GM12878 (cell line): ENCODE measurements at regions of chr7 and their contacts with region 1.

Region 1: GRCh38 chr7:95454438-95455045 is 19.7 kb upstream of the PON2 start:
- DNase-seq: no peak
- ATAC-seq: peak; percentile 63
- H3K4me3 ChIP-seq: no peak overlapping the region
- H3K27ac ChIP-seq: no peak overlapping the region
- H3K4me1 ChIP-seq: no peaks in the 10 kb centered on the region
- H3K27me3 ChIP-seq: no peaks in the 10 kb centered on the region
- CTCF ChIP-seq: no peak; a peak in 1 of 6 replicates
- EP300 ChIP-seq: peak in 1 of 2 experiments; percentile 39; a peak in 1 of 4 replicates
- POLR2A ChIP-seq: no peak
- RAD21 ChIP-seq: peak; percentile 21; the same call in 1 of the 2 replicates

Region 2: GRCh38 chr7:95421000-95421846 is 33.3 kb before region 1 on chr7:
- CTCF ChIA-PET with region 1: no interaction called
- POLR2A ChIA-PET with region 1: no interaction called
- RAD21 ChIA-PET with region 1: interaction called, 10 read pairs
- SMC1A ChIA-PET with region 1: interaction called, 12 read pairs
- in situ Hi-C with region 1: no loop called
- intact Hi-C with region 1: no loop called
- DNase-seq: no peak
- ATAC-seq: peak; percentile 83
- H3K4me3 ChIP-seq: no peak overlapping the region
- H3K27ac ChIP-seq: no peak overlapping the region
- H3K4me1 ChIP-seq: no peaks in the 10 kb centered on the region
- H3K27me3 ChIP-seq: no peaks in the 10 kb centered on the region
- CTCF ChIP-seq: no peak
- EP300 ChIP-seq: no peak
- POLR2A ChIP-seq: no peak
- RAD21 ChIP-seq: no peak

Region 3: GRCh38 chr7:95427166-95427565 is 27.4 kb before region 1 on chr7:
- CTCF ChIA-PET with region 1: interaction called, 5 read pairs
- POLR2A ChIA-PET with region 1: interaction called, 4 read pairs
- RAD21 ChIA-PET with region 1: interaction called, 10 read pairs
- SMC1A ChIA-PET with region 1: interaction called, 13 read pairs
- in situ Hi-C with region 1: no loop called
- intact Hi-C with region 1: no loop called
- DNase-seq: no peak
- ATAC-seq: no peak
- H3K4me3 ChIP-seq: no peak overlapping the region
- H3K27ac ChIP-seq: no peak overlapping the region
- H3K4me1 ChIP-seq: no peaks in the 10 kb centered on the region
- H3K27me3 ChIP-seq: no peaks in the 10 kb centered on the region
- CTCF ChIP-seq: no peak
- EP300 ChIP-seq: no peak
- POLR2A ChIP-seq: no peak
- RAD21 ChIP-seq: no peak

Region 4: DNA sequence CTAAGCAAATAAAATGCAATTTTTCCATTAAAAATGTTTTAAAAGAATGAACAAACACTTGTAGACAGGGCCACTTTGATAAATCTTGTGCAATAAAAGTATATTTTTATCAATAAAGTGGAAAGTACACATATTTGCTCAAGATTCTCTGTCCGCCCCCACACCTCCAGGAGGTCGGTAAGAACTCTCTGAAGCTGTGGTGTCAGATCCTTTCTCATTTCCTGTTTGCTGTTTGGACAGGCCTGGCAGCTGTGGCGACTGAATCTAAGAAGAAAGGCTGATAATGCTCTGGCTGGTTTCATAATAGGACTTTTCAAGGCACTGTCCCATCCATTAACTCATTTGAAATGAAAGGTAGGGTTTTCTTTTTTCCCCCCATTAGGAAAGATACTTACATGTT is 15.9 kb after region 1 on chr7:
- CTCF ChIA-PET with region 1: interaction called, 27 read pairs
- POLR2A ChIA-PET with region 1: interaction called, 4 read pairs
- RAD21 ChIA-PET with region 1: interaction called, 22 read pairs
- SMC1A ChIA-PET with region 1: interaction called, 32 read pairs
- in situ Hi-C with region 1: no loop called
- intact Hi-C with region 1: loop called (anchors 1 kb)
- DNase-seq: no peak
- ATAC-seq: peak; percentile 99
- H3K4me3 ChIP-seq: no peak overlapping the region
- H3K27ac ChIP-seq: no peak overlapping the region
- H3K4me1 ChIP-seq: no peaks in the 10 kb centered on the region; the same call in 1 of the 2 replicates
- H3K27me3 ChIP-seq: no peaks in the 10 kb centered on the region
- CTCF ChIP-seq: no peak
- EP300 ChIP-seq: no peak
- POLR2A ChIP-seq: no peak
- RAD21 ChIP-seq: no peak

Region 5: DNA sequence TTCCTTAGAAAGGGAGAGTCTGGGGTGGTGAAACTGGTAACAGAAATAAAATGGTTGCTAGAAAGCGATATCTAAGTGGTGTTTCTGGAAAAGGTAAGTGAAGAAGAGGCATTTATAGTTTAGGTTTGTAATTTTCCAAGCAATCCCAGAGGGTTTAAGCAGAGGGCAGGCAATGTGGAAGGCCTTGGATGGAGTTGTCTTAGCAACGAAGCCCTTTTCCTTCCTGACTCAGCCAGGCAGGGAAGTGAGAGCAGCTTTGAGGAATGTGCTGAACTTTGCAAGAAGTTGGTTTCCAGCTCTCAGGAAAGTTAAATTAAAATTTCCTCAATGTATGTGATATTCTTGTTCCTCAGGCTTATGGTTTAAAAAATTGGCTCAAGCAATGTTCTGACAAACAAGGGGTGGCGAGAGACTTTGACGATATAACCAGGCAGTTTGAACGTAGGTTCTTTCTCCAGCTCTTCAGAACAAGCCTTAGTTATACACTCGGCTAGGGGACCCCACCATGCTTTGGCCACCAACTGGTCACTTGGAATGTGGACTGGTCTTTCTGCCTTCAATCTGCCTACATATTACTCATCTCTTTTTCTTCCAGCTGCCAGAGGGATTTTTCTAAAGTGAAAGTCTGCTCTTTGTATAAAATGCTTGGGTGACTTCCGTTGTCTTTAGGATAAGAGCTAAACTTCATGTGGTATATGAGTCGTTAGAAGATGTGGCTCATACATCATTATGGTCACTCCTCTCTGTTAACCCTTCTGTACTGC is 934.3 kb after region 1 on chr7:
- CTCF ChIA-PET with region 1: no interaction called
- POLR2A ChIA-PET with region 1: no interaction called
- RAD21 ChIA-PET with region 1: no interaction called
- SMC1A ChIA-PET with region 1: no interaction called
- in situ Hi-C with region 1: no loop called
- intact Hi-C with region 1: no loop called
- DNase-seq: no peak
- ATAC-seq: no peak
- H3K4me3 ChIP-seq: no peak overlapping the region
- H3K27ac ChIP-seq: no peak overlapping the region
- H3K4me1 ChIP-seq: no peaks in the 10 kb centered on the region
- H3K27me3 ChIP-seq: no peaks in the 10 kb centered on the region
- CTCF ChIP-seq: no peak
- EP300 ChIP-seq: no peak
- POLR2A ChIP-seq: no peak
- RAD21 ChIP-seq: no peak